Heart left ventricle (tissue), 16 donors: ENCODE measurements at regions of chr7 and their contacts with region 1.

Region 1: DNA sequence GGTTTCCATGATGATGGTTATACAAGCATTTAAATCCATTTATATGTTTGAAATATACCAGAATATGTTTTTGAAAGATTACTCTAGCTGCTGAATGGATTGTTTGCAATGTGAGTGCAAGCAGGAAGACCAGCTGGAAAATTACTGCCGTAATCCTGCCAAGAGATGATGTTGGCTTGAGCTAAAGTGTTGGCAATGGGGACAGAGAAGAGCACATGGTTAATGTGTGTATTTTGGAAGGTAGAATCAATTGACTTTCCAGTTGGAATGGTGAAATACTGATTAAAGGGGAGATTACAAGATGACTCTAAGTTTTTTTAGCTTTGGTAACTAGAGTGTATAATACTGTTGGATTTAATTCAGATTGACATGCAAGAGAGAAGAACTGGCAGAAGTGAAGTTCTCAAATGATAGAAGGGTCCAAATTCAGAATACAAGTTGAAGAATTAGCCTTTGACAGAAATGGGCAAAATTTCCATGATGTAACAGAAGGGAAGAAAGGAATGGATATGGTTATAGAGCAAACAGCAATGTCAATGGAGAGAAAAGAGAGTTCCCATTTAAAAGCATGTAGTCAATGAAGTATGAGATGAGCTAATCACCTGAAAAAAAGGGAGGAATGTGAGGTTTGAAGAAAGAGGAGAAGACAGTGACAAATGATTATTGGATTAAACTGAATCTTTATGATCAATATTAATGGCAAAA is 422.0 kb downstream of the CDC14C start:
- DNase-seq: peak in 2 of 5 donors; percentile 26 to 27
- ATAC-seq: peak in 2 of 4 donors; percentile 41 to 70
- H3K4me3 ChIP-seq: no peak overlapping the region
- H3K27ac ChIP-seq: no peak overlapping the region
- H3K4me1 ChIP-seq: no peaks in the 10 kb centered on the region
- H3K27me3 ChIP-seq: no peaks in the 10 kb centered on the region
- CTCF ChIP-seq: no peak
- POLR2A ChIP-seq: no peak

Region 2: DNA sequence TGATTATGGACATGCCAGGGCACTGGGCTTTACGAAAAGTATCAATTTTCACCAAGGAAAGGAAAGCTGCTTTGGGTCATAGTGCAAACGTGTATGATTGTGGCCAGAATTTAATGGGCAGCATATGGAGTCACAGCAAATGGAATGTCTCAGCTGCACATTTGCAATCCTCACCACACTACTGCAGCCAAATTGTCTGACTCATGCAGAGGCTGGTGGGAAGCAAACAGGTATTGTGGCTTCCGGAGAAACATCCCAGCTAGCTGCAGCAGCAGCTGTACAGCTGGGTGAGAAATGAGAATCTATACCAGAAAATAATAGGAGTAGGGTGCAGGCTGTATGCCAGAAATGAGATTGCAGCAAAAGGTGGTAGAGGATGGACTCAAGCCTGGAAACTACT is 52.4 kb after region 1 on chr7:
- intact Hi-C with region 1: loop called in 1 of 10 experiments (anchors 10 kb)
- DNase-seq: no peak
- ATAC-seq: peak in 1 of 4 donors; percentile 78
- H3K4me3 ChIP-seq: no peak overlapping the region
- H3K27ac ChIP-seq: no peak overlapping the region
- H3K4me1 ChIP-seq: no peaks in the 10 kb centered on the region
- H3K27me3 ChIP-seq: no peaks in the 10 kb centered on the region
- CTCF ChIP-seq: no peak
- POLR2A ChIP-seq: no peak